Activated T-helper 2 cell treated with anti-CD3 and anti-CD28 coated beads, Interferon-gamma antibody, Interleukin-2, Interleukin-4, amounts not matched to agents 10 μg/mL and 5 μg/mL and 100 μg/mL, durations not matched to agents 14 hours and 24 hours and 36 hours (primary cell): ENCODE measurements at regions of chr17 and their contacts with region 1.

Region 1: GRCh38 chr17:31067699-31068184 is 27.0 kb upstream of the NF1 start:
- DNase-seq: no peak
- H3K4me3 Mint-ChIP-seq: no peak overlapping the region
- H3K27ac Mint-ChIP-seq: no peak overlapping the region
- H3K4me1 Mint-ChIP-seq: peaks cover 9% of the 10 kb centered on the region
- H3K27me3 Mint-ChIP-seq: peaks cover 16% of the 10 kb centered on the region

Region 2: DNA sequence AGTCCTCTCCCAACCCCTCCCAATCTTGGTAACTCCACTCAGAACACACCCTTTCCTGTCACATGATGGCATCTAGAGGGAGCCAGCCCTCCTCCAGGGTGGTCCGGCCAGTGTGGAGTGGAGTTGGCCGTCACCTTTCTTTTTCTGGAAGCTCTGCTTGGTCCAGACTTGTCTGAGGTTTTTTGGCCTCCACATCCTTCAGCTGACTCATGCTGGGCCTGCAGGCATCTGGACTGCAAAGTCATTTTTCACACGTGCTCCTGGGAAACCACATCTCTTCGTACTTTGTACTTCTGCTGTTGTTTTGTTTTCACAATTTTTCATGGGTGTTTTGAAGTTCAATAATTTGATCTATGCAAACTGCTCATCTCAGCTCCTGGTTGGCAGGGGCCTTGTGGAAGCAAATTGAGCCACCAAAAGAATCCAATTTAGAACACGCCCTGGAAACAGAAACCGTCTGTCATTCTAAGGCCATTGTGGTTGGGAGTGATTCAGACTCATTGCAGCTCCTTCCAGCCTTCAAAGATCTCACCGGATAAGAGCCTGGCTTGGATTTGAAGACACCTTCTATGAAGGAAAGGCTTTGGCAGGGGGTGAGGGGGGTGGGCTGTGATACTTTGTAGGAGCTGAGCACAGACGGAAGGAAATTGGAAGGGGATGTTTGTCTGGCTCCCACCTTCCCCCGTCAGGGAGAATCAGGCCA is 15.4 kb before region 1 on chr17:
- intact Hi-C with region 1: loop called (anchors 1 kb)
- DNase-seq: no peak
- H3K4me3 Mint-ChIP-seq: no peak overlapping the region
- H3K27ac Mint-ChIP-seq: no peak overlapping the region
- H3K4me1 Mint-ChIP-seq: peaks cover 6% of the 10 kb centered on the region
- H3K27me3 Mint-ChIP-seq: no peaks in the 10 kb centered on the region

Region 3: DNA sequence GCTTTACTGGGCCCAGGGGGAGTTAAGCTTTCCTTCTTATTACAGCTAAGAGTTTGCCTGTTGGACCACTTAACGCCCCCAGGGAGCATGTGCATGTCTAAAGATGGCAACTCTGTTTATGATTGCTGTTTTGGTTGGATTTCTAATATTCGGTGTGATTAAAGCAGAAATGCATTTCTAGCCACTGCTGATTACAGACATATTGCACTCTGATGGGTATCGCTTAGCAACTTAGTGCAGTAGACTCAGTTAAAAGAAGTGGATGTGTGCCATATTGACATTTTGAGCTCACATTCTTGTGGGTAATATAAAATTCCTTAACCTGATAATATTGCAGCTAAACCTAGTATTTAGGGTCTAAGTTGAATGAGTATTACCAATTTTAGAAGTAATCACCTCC is 31.3 kb after region 1 on chr17:
- intact Hi-C with region 1: no loop called
- DNase-seq: no peak
- H3K4me3 Mint-ChIP-seq: no peak overlapping the region
- H3K27ac Mint-ChIP-seq: no peak overlapping the region
- H3K4me1 Mint-ChIP-seq: peaks cover 14% of the 10 kb centered on the region
- H3K27me3 Mint-ChIP-seq: no peaks in the 10 kb centered on the region